ENCODE measurements at regions of chr7 and their contacts with region 1.

Region 1: GRCh38 chr7:97027427-97028234 is 3.0 kb upstream of the DLX5 start:
- DNase-seq: peak; percentile 41 to 74
- ATAC-seq: peak; percentile 89

Region 2: GRCh38 chr7:95916573-95917297 is 1110.9 kb before region 1 on chr7:
- intact Hi-C with region 1: loop called in 1 of 2 experiments (anchors 5 kb)
- DNase-seq: peak; percentile 48 to 87
- ATAC-seq: peak; percentile 65

Region 3: DNA sequence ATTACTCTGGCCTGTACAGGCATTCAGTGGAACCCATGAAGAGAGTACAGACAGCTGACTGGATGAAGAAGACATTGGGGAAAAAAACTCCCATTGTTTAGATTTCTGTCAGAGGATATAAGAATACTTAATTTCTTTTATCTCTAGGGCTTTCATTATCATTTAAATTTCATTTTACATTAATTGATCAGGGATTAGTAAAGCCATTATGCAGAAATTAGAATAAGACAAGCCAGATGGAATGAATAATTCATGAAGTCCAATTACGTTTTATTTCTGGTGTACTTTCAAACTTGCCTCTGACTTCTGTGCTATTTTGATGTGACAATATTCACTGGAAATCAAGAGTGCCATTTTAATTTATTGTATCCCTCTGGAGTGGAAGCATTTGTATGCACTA is 952.8 kb before region 1 on chr7:
- intact Hi-C with region 1: loop called in 1 of 2 experiments (anchors 5 kb)
- DNase-seq: no peak
- ATAC-seq: no peak

Region 4: DNA sequence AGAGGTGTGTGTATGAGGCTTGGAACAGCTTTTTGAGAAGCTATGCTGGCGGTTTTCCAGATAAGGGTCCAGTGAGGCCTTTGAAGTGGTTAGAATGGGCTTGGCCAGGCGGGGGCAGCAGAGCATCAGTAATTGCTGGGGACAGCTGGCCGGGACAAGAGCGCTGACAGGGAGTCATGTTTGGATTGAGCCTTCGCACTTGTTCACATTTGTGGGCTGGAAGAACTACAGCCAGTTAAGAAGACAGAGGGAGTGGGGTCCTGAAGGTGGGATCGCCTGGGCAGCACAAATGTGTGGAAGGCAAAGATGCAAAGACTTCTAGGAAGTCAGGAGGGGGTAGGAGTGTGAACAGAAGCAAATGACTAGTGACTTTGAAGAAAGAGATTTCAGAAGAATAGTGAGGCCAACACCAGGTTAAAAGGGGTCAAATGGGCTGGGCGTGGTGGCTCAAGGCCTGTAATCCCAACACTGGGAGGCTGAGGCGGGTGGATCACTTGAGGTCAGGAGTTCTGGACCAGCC is 77.1 kb after region 1 on chr7:
- intact Hi-C with region 1: no loop called
- DNase-seq: peak; percentile 55 to 87
- ATAC-seq: peak; percentile 92

Measured in left colon (tissue), 2 donors.